Heart right ventricle (tissue), 16 donors: ENCODE measurements at regions of chr20 and their contacts with region 1.

Region 1: GRCh38 chr20:20237093-20237959 is 130.6 kb upstream of the INSM1 start:
- DNase-seq: peak in 1 of 2 donors; percentile 37
- ATAC-seq: peak in 7 of 8 donors; percentile 55 to 76 (median 69)
- H3K4me3 ChIP-seq: no peak overlapping the region
- H3K27ac ChIP-seq: no peak overlapping the region
- H3K4me1 ChIP-seq: peaks cover 0 to 10% (median 0%) of the 10 kb centered on the region in 9 donors
- H3K27me3 ChIP-seq: peaks cover 0 to 9% (median 0%) of the 10 kb centered on the region in 7 donors
- CTCF ChIP-seq: peak; percentile 52 to 82 (median 71)

Region 2: GRCh38 chr20:20148779-20149178 is 88.5 kb before region 1 on chr20:
- intact Hi-C with region 1: loop called in 2 of 10 experiments (anchors 10 kb)
- DNase-seq: no peak
- ATAC-seq: no peak
- H3K4me3 ChIP-seq: no peak overlapping the region
- H3K27ac ChIP-seq: no peak overlapping the region
- H3K4me1 ChIP-seq: no peaks in the 10 kb centered on the region
- H3K27me3 ChIP-seq: no peaks in the 10 kb centered on the region
- CTCF ChIP-seq: no peak

Region 3: DNA sequence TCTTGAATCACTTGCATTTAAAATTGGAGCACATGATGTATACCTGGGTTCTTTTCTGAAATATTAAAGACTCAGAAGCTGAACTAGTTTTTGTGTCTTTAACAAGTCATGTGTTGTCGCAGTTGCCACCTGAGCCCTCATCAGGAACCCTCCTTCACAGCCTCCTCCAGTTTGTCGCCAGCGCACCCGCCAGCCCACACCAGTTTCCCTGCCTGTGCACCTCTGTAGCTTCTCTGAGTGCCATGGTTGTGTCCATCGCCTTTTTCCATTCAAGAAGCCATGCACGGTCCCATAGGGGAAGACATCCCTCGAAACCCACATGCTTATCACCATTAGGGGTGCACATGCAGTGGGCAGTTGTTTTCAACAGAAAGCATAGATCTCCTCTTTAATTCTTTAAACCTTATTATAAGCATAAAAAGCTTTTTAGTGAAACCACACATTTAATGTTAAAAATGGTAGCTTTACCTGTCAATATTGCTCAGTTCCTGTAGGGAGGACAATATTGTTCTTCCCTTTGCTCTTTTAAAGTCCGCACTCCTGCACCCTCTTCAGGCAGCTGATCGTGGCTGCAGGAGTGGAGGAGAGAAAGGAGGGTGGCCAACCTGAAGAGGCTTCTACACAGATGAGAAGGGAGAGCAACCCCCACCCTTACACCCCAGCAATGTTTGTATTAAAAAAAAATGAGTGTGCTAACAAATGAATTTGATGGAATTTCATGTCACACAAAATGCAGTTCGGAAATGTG is 63.1 kb before region 1 on chr20:
- intact Hi-C with region 1: loop called in 1 of 10 experiments (anchors 10 kb)
- DNase-seq: no peak
- ATAC-seq: peak in 1 of 8 donors; percentile 35
- H3K4me3 ChIP-seq: no peak overlapping the region
- H3K27ac ChIP-seq: no peak overlapping the region
- H3K4me1 ChIP-seq: no peaks in the 10 kb centered on the region
- H3K27me3 ChIP-seq: no peaks in the 10 kb centered on the region
- CTCF ChIP-seq: peak in 1 of 9 donors; percentile 8